Transverse colon (tissue), 4 donors: ENCODE measurements at regions of chr18 and their contacts with region 1.

Region 1: DNA sequence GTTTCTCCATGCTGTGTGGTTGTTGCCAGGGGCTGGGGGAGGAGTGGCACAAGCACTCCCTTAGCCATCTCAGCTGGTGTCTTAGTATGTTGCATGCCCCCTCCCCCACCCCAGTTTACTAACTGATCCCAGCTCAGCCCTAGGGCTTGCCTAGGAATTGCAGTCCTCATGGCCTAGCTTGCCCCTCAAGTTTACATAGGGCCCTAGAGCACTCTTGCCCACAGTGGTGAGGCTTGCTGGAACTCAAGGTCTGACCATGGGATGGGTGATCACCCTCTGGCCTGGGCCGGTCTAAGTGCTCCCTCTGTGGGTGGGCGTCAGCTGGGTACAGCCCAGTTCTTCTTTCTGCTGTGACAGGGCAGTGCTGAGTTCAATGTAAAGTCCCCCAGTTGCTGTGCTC is 156.1 kb upstream of the PIEZO2 start:
- DNase-seq: no peak
- H3K4me3 ChIP-seq: no peak overlapping the region
- H3K27ac ChIP-seq: no peak overlapping the region
- H3K4me1 ChIP-seq: no peaks in the 10 kb centered on the region
- H3K27me3 ChIP-seq: no peaks in the 10 kb centered on the region
- CTCF ChIP-seq: no peak
- EP300 ChIP-seq: no peak
- POLR2A ChIP-seq: no peak

Region 2: DNA sequence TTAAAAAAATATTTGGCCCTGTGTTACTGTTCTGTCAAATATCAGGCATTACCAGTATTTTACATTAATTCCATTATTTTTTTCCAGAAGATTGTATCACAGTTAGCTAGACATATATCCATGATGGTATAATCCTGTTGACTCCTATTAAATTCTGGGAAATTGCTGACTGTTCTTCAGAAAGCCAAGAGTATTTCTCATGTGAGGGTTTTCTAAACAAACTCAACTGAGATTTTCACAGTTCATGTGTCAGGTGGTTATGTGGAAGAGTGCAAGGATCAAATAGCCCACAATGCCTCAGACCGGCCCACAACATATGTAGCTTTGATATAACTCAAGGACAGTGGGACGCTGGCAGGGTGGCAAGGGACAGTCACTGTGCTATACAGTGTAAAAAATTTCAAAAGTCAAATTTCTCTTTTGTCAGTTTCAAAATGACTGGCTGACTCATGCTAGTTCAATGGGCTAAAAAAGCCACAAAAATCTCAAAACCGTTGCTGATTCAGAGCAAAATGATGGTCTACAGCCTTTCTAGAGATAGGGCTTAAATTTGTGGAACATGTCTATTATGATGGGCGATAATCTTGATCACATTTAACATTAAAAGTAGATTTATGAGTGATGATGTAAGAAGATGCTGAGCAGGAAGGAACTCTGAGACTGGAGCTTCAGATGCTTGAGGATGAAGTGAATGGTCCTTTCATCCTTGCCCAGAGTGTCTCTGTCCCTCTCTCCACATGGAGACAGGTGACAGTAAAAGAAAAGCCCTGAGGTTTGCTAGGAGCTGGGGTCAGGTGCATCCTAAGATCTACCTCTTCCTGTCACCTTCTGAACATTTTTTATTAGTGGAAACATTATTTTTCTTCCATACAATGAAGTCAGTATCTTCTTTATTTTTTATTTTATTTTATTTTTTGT is 19.7 kb after region 1 on chr18:
- in situ Hi-C with region 1: no loop called
- intact Hi-C with region 1: loop called (anchors 1 kb)
- DNase-seq: no peak
- H3K4me3 ChIP-seq: no peak overlapping the region
- H3K27ac ChIP-seq: no peak overlapping the region
- H3K4me1 ChIP-seq: no peaks in the 10 kb centered on the region
- H3K27me3 ChIP-seq: no peaks in the 10 kb centered on the region
- CTCF ChIP-seq: no peak
- EP300 ChIP-seq: no peak
- POLR2A ChIP-seq: no peak